Naive thymus-derived CD4-positive, alpha-beta T cell (primary cell): ENCODE measurements at regions of chr3 and their contacts with region 1.

Region 1: DNA sequence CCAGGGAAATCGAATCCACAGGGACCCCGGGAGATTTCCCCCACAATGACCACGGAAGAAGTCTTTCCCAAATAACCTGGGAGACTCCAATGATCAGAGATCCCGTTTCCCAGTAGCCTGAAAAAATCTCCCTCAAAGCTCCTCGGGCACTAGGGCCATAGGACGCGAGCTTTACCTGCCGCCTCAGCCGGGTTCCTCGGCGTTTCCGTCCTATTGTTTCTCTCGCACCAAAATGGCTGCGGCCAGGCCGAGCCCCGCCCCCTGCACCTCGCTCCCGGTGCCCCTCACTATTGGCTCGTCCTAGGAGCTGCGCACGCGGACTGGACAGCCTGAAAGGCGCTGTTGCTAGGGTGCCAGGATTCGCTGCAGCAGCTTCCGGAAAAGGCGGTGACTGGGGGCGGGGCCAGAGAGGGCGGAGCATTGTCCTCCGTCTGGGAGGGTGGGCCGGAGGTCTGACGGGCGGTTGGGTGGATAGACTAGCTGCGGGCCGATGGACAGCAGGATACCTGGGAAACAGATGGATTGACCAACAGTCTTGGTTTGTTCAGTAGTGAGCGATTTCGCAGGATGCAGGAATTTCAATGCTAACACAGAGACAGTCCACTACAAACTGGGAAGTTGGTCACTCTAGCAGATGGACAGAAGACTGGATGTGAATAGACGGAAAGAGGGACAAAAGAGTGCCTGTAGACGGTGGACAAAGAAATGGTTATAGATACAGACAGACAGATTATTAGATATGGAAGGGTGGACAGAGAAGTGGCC is at the start of gene IP6K2:
- DNase-seq: peak; percentile 92 to 99 (median 97)
- ATAC-seq: peak; percentile 100
- H3K4me3 ChIP-seq: peak within 1 kb of the TSS; percentile 99
- H3K4me3 Mint-ChIP-seq: peak within 1 kb of the TSS; percentile 94 to 99 (median 98)
- H3K27ac ChIP-seq: peak within 1 kb of the TSS; percentile 84
- H3K27ac Mint-ChIP-seq: peak within 1 kb of the TSS; percentile 83 to 99 (median 96)
- H3K4me1 ChIP-seq: peaks cover 23 to 29% of the 10 kb centered on the region in 2 donors
- H3K4me1 Mint-ChIP-seq: peaks cover 33 to 46% (median 39%) of the 10 kb centered on the region in 7 donors
- H3K27me3 ChIP-seq: no peaks in the 10 kb centered on the region
- H3K27me3 Mint-ChIP-seq: peaks cover 0 to 22% (median 0%) of the 10 kb centered on the region in 5 donors
- total RNA-seq, gene IP6K2: 72.0 to 94.3 (median 85.9) TPM

Region 2: DNA sequence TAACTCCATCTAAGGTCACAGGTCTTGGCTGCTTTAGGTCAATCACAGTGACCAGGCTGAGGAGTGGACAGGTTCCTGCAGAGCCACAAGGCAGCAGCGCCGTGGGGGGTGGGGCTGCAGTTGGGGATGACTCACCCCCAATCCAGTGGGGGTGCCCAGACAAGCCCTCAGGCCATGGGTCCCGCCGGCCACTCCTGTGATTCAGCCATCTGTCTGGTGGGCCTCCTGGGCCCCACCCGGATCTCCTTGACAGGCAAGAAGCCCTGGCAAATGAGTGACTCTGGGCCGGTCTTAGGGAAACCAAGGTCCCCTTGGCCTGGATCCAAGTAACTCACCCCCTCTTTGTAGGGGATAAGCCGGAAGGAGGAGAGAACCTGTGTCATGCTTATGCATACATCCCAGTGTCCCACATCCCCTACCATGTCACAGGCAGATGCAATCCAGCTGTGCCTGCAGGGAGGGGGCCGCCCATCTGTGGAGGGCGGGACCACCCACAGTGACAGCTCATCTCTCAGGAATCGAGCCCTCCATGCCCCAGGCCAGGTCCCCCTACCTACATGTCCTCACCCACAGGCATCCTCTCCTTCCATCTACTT is 121.5 kb before region 1 on chr3:
- CTCF ChIA-PET with region 1: no interaction called
- POLR2A ChIA-PET with region 1: no interaction called
- intact Hi-C with region 1: no loop called
- DNase-seq: no peak
- ATAC-seq: peak; percentile 21
- H3K4me3 ChIP-seq: no peak overlapping the region
- H3K4me3 Mint-ChIP-seq: no peak overlapping the region
- H3K27ac ChIP-seq: no peak overlapping the region
- H3K27ac Mint-ChIP-seq: no peak overlapping the region
- H3K4me1 ChIP-seq: no peaks in the 10 kb centered on the region
- H3K4me1 Mint-ChIP-seq: peaks cover 0 to 8% (median 3%) of the 10 kb centered on the region in 7 donors
- H3K27me3 ChIP-seq: peaks cover 0 to 7% of the 10 kb centered on the region in 2 donors
- H3K27me3 Mint-ChIP-seq: peaks cover 6 to 28% (median 16%) of the 10 kb centered on the region in 5 donors

Region 3: GRCh38 chr3:48656061-48656840 is 60.9 kb before region 1 on chr3:
- CTCF ChIA-PET with region 1: no interaction called
- POLR2A ChIA-PET with region 1: no interaction called
- intact Hi-C with region 1: loop called in 1 of 2 experiments (anchors 2 kb)
- DNase-seq: peak; percentile 75 to 87 (median 86)
- ATAC-seq: peak; percentile 90
- H3K4me3 ChIP-seq: peak overlapping the region; percentile 70
- H3K4me3 Mint-ChIP-seq: peak overlapping the region; percentile 67 to 86 (median 80)
- H3K27ac ChIP-seq: peak overlapping the region; percentile 65
- H3K27ac Mint-ChIP-seq: peak overlapping the region; percentile 42 to 88 (median 79)
- H3K4me1 ChIP-seq: peaks cover 12 to 14% of the 10 kb centered on the region in 2 donors
- H3K4me1 Mint-ChIP-seq: peaks cover 6 to 23% (median 9%) of the 10 kb centered on the region in 7 donors
- H3K27me3 ChIP-seq: no peaks in the 10 kb centered on the region
- H3K27me3 Mint-ChIP-seq: peaks cover 0 to 15% (median 5%) of the 10 kb centered on the region in 5 donors

Region 4: DNA sequence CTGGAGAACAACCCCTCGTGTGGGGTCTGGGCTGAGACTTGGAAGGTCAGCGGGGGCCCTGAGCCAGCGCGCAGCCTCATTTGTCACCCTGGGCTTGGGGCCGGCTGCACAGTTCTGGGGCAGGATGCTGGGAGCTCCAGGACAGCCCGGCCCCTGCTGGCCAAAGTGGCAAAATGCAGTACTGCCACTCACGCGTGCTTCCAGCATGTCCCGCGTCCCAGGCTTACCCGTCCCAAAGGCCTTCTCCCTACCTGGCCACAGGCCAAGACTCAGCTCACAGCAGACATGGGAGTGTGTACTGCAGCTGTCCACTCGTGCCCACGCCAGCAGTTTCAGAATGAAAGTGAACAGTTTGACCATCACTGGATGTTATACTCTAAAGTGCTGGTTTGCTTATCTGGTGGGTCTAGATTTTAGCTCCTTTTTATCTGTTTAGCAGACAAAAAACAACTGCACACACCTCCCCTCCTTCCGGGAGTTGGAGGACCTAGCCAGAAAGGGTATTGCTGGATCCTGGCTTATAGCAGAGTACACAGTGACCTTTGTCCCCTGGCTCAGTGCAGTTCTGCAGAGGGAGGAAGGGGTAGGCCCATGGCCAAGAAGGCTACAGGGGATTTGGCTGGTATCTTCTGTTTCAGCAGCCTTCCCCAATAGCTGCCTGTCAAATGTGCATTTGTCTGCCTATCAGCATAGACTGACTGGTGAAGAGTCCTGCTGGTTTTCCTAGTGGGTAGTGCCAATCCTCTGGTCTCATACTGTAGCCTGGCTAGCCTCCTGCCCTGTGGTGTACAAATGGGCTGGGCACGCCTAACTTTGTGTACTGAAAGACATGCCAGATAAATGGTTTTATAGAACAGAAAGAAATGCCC is 23.0 kb after region 1 on chr3:
- CTCF ChIA-PET with region 1: interaction called, 11 read pairs
- POLR2A ChIA-PET with region 1: no interaction called
- intact Hi-C with region 1: loop called in 1 of 2 experiments (anchors 1 kb)
- DNase-seq: peak; percentile 8 to 55 (median 35)
- ATAC-seq: peak; percentile 90
- H3K4me3 ChIP-seq: no peak overlapping the region
- H3K4me3 Mint-ChIP-seq: no peak overlapping the region
- H3K27ac ChIP-seq: no peak overlapping the region
- H3K27ac Mint-ChIP-seq: peak overlapping the region in 2 of 9 donors; percentile 1 to 6
- H3K4me1 ChIP-seq: no peaks in the 10 kb centered on the region
- H3K4me1 Mint-ChIP-seq: peaks cover 0 to 9% (median 0%) of the 10 kb centered on the region in 7 donors
- H3K27me3 ChIP-seq: no peaks in the 10 kb centered on the region
- H3K27me3 Mint-ChIP-seq: no peaks in the 10 kb centered on the region

Region 5: DNA sequence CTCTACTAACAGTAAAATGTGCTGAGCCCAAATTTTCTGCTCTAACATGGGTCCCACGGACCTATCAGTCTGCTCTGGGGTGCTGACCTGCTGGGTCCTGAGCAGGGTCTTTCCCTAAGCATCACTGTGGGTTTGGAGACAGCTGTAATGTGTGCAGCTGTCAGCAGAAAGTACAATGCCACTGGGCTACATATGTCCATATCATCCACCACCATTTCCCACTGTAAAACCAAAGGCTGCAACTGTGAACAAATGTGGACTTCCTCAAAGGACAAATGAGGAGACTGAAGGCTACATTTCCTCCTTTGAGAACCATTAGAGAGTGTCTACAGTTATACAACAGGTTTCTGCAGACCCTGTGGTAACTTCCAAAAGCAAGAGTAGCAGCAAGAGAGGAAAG is 33.7 kb after region 1 on chr3:
- CTCF ChIA-PET with region 1: no interaction called
- POLR2A ChIA-PET with region 1: no interaction called
- intact Hi-C with region 1: no loop called
- DNase-seq: no peak
- ATAC-seq: no peak
- H3K4me3 ChIP-seq: no peak overlapping the region
- H3K4me3 Mint-ChIP-seq: no peak overlapping the region
- H3K27ac ChIP-seq: no peak overlapping the region
- H3K27ac Mint-ChIP-seq: peak overlapping the region in 2 of 9 donors; percentile 14 to 28
- H3K4me1 ChIP-seq: no peaks in the 10 kb centered on the region
- H3K4me1 Mint-ChIP-seq: peaks cover 0 to 3% (median 0%) of the 10 kb centered on the region in 7 donors
- H3K27me3 ChIP-seq: no peaks in the 10 kb centered on the region
- H3K27me3 Mint-ChIP-seq: no peaks in the 10 kb centered on the region

Region 6: DNA sequence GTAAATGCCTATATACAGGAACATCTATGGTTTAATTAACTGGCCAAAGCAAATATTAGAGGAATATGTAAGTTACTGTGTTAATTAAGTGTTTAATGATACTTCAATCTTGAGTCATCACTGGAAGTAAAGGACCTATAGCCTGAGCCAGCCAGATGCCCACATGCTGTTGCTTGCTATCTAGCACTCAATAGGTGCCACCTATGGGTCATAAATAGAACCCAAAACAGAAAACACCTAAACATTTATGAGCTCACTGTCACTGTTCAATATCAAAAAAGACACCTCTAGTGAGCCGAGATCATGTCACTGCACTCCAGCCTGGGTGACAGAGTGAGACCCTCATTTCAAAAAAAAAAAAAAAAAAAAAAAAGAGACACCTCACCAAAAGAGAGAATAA is 48.2 kb after region 1 on chr3:
- CTCF ChIA-PET with region 1: no interaction called
- POLR2A ChIA-PET with region 1: no interaction called
- intact Hi-C with region 1: no loop called
- DNase-seq: no peak
- ATAC-seq: peak; percentile 45
- H3K4me3 ChIP-seq: no peak overlapping the region
- H3K4me3 Mint-ChIP-seq: no peak overlapping the region
- H3K27ac ChIP-seq: no peak overlapping the region
- H3K27ac Mint-ChIP-seq: peak overlapping the region in 2 of 9 donors; percentile 0 to 26
- H3K4me1 ChIP-seq: no peaks in the 10 kb centered on the region
- H3K4me1 Mint-ChIP-seq: peaks cover 0 to 3% (median 0%) of the 10 kb centered on the region in 7 donors
- H3K27me3 ChIP-seq: no peaks in the 10 kb centered on the region
- H3K27me3 Mint-ChIP-seq: no peaks in the 10 kb centered on the region

Region 7: DNA sequence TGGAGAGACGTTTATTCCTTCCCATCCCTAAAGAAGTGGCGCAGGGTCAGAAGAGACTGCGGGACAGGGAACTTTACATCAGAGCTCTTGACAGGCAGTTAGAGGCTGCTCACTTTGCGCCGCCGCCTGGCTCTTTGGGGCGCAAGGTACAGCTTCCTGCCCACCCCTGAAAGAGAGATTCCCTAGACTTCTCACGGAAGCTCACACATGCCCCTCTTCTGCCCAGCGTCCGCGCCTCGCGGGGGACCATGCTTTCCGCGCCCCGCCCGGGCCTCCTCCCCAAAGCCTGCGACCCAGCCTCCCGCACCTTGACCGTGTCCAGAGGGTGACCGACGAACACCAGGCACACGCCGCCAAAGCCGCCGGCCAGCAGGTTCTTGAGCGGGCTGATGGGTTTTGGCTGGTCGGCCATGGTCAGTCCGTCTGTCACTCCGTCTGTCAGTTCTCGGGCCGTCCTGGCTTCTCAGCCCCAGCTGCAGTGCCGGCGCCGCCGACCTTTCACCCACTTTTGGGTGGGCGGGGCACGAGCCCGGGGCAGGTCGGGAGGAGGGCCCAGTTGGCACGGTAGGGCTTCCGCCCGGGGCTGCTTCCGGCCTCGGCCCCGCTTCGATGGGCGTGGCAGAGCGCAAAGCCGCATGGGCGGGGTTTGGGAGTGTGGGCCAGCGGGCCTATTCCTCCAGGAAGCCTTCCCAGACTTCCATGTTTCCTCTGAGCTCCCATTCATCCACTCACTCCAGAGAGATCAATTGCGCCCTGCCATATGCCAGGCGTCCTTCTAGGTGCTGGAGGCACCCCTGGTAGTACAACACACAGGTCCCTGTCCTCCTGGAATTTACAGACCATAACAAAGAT is 181.4 kb after region 1 on chr3 and contains the start of gene SLC25A20:
- CTCF ChIA-PET with region 1: interaction called, 3 read pairs
- POLR2A ChIA-PET with region 1: interaction called, 3 read pairs
- intact Hi-C with region 1: loop called (anchors 1 kb)
- DNase-seq: peak; percentile 78 to 95 (median 85)
- ATAC-seq: peak; percentile 98
- H3K4me3 ChIP-seq: peak within 1 kb of the TSS; percentile 91
- H3K4me3 Mint-ChIP-seq: peak within 1 kb of the TSS; percentile 89 to 99 (median 94)
- H3K27ac ChIP-seq: peak within 1 kb of the TSS; percentile 76
- H3K27ac Mint-ChIP-seq: peak within 1 kb of the TSS; percentile 83 to 99 (median 93)
- H3K4me1 ChIP-seq: peaks cover 21 to 23% of the 10 kb centered on the region in 2 donors
- H3K4me1 Mint-ChIP-seq: peaks cover 27 to 51% (median 41%) of the 10 kb centered on the region in 7 donors
- H3K27me3 ChIP-seq: no peaks in the 10 kb centered on the region
- H3K27me3 Mint-ChIP-seq: no peaks in the 10 kb centered on the region
- total RNA-seq, gene SLC25A20: 6.6 to 27.3 (median 12.8) TPM

Region 8: DNA sequence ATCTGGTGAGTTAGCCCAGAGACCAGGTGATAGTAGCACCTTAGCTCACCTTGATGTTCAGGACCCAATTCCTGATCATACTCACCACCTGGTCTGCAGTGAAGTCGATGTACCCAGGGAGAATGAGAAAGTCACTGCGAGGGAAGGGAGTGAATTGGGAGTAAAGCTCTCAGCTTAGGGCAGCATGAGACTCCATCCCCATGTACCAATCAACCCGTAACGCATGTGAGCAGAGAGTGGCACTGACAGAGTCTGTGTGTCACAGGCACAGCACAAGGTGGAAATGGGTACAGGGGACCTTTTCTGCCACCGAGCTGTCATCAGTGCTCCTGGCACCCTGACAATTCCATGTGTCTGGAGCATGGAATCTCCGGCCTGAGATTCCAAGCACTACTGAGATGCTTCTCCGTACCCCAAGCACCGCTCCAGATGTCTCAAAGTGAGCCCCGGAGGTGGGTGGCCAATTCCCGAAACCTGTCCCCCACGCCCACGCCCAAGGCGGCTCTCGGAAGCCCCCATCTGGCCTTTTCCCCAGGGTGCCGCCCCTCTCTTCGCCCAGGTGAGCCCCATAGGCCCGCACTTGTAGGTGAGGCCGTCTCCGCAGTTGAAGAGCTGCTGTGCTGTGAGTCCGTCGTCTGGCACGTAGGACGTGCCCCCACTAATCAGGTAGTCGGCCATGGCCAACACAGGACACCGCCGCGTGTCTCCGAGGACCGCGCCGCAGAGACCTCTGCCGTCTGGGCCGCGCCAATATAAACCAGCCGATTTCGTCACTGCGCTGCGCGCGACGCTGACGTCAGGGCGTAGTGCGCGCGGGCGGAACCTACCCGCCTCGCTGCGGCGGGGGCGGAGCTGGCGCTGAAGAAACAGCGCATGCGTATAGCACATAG is 311.8 kb after region 1 on chr3 and contains the start of gene IMPDH2:
- CTCF ChIA-PET with region 1: no interaction called
- POLR2A ChIA-PET with region 1: interaction called, 3 read pairs
- intact Hi-C with region 1: loop called in 1 of 2 experiments (anchors 2 kb)
- DNase-seq: peak; percentile 89 to 95 (median 93)
- ATAC-seq: peak; percentile 97
- H3K4me3 ChIP-seq: peak within 1 kb of the TSS; percentile 74
- H3K4me3 Mint-ChIP-seq: peak within 1 kb of the TSS; percentile 86 to 96 (median 94)
- H3K27ac ChIP-seq: peak within 1 kb of the TSS; percentile 98
- H3K27ac Mint-ChIP-seq: peak within 1 kb of the TSS; percentile 92 to 100 (median 98)
- H3K4me1 ChIP-seq: peaks cover 10 to 11% of the 10 kb centered on the region in 2 donors
- H3K4me1 Mint-ChIP-seq: peaks cover 7 to 52% (median 34%) of the 10 kb centered on the region in 7 donors
- H3K27me3 ChIP-seq: no peaks in the 10 kb centered on the region
- H3K27me3 Mint-ChIP-seq: no peaks in the 10 kb centered on the region
- total RNA-seq, gene IMPDH2: 102 to 206 (median 121) TPM

Region 9: GRCh38 chr3:49411968-49412631 is 694.9 kb after region 1 on chr3 and contains the starts of genes RHOA and TCTA:
- CTCF ChIA-PET with region 1: no interaction called
- POLR2A ChIA-PET with region 1: no interaction called
- intact Hi-C with region 1: loop called in 1 of 2 experiments (anchors 1 kb)
- DNase-seq: peak; percentile 94 to 100 (median 99)
- ATAC-seq: peak; percentile 90
- H3K4me3 ChIP-seq: peak within 1 kb of the TSS; percentile 86
- H3K4me3 Mint-ChIP-seq: peak within 1 kb of the TSS; percentile 82 to 97 (median 94)
- H3K27ac ChIP-seq: peak within 1 kb of the TSS; percentile 96
- H3K27ac Mint-ChIP-seq: peak within 1 kb of the TSS; percentile 88 to 97 (median 95)
- H3K4me1 ChIP-seq: peaks cover 61 to 65% of the 10 kb centered on the region in 2 donors
- H3K4me1 Mint-ChIP-seq: peaks cover 51 to 82% (median 71%) of the 10 kb centered on the region in 7 donors
- H3K27me3 ChIP-seq: no peaks in the 10 kb centered on the region
- H3K27me3 Mint-ChIP-seq: peaks cover 0 to 2% (median 0%) of the 10 kb centered on the region in 5 donors
- total RNA-seq, gene RHOA: 212 to 411 (median 218) TPM
- total RNA-seq, gene TCTA: 24.9 to 34.5 (median 28.5) TPM

Region 10: DNA sequence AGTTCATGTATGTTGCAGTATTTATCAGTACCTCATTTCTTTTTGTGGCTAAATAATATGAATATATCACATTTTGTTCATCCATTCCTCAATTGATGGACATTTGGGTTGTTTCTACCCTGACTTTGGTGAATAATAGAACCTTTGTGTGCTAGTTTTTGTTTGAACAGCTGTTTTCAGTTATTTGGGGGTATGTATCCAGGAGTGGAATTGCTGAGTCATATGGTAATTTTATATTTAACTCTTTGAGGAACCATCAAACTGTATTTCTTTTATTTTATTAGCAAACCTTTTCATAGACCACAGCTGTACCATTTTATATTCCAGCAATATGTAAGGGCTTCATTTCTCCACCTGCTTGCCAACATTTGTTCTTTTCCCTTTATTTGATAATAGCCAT is 1333.2 kb after region 1 on chr3:
- CTCF ChIA-PET with region 1: no interaction called
- POLR2A ChIA-PET with region 1: no interaction called
- intact Hi-C with region 1: no loop called
- DNase-seq: no peak
- ATAC-seq: no peak
- H3K4me3 ChIP-seq: no peak overlapping the region
- H3K4me3 Mint-ChIP-seq: no peak overlapping the region
- H3K27ac ChIP-seq: no peak overlapping the region
- H3K27ac Mint-ChIP-seq: peak overlapping the region in 2 of 9 donors; percentile 29 to 33
- H3K4me1 ChIP-seq: no peaks in the 10 kb centered on the region
- H3K4me1 Mint-ChIP-seq: peaks cover 0 to 8% (median 0%) of the 10 kb centered on the region in 7 donors
- H3K27me3 ChIP-seq: no peaks in the 10 kb centered on the region
- H3K27me3 Mint-ChIP-seq: no peaks in the 10 kb centered on the region